ENCODE measurements at regions of chr11 and their contacts with region 1.

Region 1: DNA sequence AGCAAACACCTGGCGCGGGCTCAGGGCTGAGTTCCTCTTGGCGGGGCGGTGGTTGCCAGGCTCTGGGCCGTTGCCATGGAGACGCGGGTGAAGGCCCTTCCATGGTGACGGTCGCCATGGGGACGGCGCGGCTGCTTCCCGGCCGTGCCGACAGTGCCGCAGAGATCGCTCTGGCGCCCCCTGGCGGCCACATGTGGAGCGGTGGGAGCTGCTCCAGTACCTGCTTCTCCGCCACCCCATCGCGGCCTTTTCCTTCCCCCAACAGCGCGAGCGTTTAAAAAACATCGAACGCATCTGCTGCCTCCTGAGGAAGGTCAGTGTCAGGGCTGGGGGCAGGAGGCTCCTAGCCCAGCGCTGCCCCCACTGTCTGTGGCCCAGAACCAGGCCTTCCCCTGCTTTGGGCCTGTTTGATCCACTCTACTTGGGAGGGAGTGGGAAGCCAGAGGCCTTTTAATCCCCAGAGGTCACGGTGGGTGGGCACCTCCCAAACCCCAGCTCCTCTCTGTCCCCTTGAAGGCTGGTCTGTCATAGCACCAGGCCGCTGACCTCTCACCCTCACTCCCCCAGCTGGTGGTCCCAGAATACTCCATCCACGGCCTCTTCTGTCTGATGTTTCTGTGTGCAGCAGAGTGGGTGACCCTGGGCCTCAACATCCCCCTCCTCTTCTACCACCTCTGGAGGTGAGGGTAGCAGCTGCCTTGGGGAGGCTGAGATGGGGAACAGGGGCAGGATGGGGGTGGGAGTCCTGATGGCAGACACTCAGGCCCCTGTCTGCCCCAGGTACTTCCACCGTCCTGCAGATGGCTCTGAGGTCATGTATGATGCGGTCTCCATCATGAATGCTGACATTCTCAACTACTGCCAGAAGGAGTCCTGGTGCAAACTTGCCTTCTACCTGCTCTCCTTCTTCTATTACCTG is 4.8 kb downstream of the CNIH2 start:
- DNase-seq: peak; percentile 98 to 100
- ATAC-seq: peak; percentile 82

Region 2: DNA sequence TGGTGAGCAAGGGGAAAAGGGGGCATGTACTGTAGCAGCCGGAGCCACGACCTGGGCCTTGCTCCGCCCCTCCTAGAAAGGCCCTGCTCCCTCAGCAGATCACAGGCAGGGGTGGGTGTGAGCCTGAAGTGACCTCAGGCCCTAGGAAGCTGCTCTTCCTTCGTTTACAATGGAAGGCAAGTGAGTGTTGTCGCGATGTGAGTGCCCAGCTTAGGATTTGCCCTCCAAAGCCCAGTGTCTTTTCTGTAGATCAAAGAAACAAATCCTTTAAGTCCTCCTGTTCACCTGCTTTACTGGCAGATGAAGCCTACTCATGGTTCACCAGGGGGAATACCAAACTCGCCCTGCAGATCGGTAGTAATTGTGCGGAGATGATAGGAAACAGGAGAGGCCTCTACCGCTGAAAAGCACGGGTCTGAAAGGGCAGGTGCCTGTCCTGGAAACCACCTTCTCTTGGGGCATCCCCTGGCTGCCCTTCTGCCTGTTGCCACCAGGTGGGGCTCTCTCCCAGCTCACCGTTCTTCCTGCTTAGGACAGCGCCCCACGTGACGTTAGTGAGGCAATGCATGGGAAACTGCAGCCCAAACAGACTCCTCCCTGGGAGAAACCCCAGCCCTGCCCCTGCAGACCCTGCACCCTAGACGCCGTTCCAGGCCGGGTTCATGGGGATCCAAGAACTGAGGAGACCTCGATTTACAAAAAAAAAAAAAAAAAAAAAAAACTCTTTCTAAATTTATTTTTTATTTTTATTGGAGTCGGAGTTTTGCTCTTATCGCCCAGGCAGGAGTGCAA is 60.2 kb before region 1 on chr11:
- intact Hi-C with region 1: loop called in 1 of 2 experiments (anchors 5 kb)
- DNase-seq: peak; percentile 87 to 91
- ATAC-seq: peak; percentile 98

Region 3: GRCh38 chr11:66344550-66345315 is 62.0 kb after region 1 on chr11 and contains the start of gene BRMS1:
- intact Hi-C with region 1: no loop called
- DNase-seq: peak; percentile 99 to 100
- ATAC-seq: peak; percentile 79
- total RNA-seq, gene BRMS1: 42.5 to 46.3 TPM